ENCODE measurements at regions of chr1 and their contacts with region 1.

Region 1: DNA sequence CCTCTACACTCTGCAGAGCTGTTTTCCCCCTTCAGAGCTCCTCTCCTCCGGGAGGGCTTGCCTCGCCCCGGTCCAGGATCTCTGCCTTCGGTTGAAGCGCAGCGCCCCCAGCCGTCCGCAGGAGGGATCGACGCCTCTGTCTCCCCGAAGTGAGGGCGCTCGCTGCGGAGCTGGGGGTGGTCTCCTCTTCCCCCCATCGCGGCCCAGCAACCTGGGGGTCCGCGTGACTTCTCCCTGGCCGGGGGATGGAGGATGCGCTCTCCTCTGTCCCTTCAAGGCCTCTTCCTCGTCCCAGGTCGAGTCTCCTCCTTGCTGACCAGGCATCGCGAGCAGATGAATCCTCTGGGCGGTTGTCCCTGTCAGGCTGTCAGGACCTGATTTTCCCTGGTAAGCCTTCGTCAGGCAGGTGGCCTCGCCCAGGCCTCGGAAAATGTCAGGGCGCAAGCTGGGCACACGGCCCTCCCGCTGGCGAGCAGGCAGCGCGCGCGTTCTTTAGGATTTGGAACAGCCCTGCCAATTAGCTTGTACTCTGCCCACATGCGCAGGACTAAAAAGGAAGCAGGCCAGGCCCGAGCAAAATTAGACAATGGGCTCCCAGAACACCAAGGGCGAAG is 90.5 kb downstream of the EDEM3 start:
- DNase-seq: peak; percentile 88
- ATAC-seq: peak; percentile 94

Region 2: GRCh38 chr1:184075055-184076029 is 588.8 kb before region 1 on chr1:
- intact Hi-C with region 1: loop called (anchors 10 kb)
- DNase-seq: no peak
- ATAC-seq: peak; percentile 86

Region 3: DNA sequence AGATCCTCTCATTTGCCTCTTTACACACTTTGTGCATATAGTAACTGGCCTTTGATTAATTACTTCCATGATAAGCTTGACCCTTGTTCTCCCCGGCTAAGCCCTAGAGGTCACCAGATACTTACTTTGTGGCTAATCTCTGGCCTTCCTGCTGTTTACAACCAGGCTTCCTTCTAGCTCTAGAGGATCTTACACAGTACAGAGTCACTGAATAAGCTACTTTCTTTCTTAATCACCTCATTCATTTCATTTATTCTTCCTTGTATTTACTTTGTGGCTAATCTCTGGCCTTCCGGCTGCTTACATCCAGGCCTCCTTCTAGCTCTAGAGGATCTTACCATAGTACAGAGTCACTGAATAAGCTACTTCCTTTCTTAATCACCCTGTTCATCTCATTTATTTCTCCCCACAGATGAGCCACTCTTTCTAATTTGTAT is 421.6 kb before region 1 on chr1:
- intact Hi-C with region 1: loop called (anchors 2 kb)
- DNase-seq: no peak
- ATAC-seq: peak; percentile 84

Region 4: GRCh38 chr1:184296466-184297243 is 367.5 kb before region 1 on chr1:
- intact Hi-C with region 1: loop called (anchors 10 kb)
- DNase-seq: peak; percentile 91
- ATAC-seq: peak; percentile 88

Region 5: GRCh38 chr1:184386312-184387068 is 277.7 kb before region 1 on chr1 and contains the start of gene C1orf21:
- intact Hi-C with region 1: loop called (anchors 2 kb)
- DNase-seq: peak; percentile 94
- ATAC-seq: peak; percentile 98
- total RNA-seq, gene C1orf21: 54.5 TPM

Region 6: DNA sequence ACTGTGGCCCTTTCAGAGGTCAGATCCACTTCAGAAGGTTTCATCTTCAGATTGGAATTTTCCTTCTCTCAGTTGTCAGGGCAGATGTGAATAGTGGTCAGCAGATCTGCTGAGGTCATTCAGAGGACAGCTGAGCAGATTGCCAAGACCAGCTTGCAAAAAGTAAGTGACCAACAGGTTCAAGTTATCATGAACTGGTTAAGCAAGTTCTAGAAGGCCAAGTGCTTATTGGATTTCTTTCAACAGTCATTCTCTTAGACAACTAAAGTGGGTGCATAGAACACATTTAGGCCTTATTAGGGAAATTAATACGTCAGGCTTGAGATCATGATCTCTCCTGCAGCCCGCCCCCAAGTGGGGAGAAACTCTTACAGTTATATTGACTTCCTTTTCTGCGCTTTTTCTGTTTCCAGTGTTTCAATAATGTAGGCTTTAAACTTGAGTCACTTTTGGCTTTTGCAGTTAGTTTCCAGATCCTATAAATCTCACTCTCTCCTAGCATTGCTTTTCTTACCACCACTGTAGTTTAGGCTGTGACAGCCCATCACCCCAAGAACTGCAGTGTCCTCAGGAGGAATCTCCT is 181.0 kb before region 1 on chr1:
- intact Hi-C with region 1: loop called (anchors 5 kb)
- DNase-seq: no peak
- ATAC-seq: peak; percentile 65

Region 7: GRCh38 chr1:184563308-184563707 is 100.8 kb before region 1 on chr1:
- intact Hi-C with region 1: loop called (anchors 2 kb)
- DNase-seq: no peak
- ATAC-seq: peak; percentile 47

Region 8: DNA sequence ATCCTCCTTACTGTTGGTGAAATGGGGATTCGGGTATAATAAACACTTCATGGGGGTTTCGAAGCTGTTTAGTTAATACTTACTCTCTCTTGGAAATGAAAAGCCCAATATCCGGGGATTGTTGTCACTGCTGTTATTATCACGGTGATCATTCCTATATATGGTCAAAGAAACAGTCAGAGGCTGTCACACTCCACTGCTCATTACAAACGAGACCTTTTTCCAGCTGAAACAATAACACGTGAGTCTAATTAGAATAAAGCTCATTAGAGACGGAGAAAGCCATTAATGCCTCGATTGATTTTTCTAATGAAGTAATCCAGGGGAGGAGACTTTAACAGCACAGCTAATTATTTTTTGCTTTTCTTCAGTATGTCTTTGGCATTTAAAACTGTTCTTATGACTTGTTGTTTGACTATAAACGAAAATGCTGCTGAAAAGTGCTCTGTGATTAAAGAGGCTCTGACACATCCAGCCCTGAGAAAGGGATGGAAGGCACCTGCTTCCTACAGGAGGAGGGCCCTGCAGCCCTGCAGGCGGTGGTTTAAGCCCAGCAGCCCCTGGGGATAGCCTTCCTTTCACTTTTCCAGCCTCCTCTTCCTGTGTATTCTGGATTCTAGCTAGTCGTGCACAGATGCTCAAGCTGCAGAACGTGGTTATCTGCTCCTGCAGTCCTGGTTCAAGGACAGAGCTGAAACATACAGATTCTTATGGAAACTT is 53.1 kb before region 1 on chr1:
- intact Hi-C with region 1: no loop called
- DNase-seq: no peak
- ATAC-seq: peak; percentile 73

Region 9: DNA sequence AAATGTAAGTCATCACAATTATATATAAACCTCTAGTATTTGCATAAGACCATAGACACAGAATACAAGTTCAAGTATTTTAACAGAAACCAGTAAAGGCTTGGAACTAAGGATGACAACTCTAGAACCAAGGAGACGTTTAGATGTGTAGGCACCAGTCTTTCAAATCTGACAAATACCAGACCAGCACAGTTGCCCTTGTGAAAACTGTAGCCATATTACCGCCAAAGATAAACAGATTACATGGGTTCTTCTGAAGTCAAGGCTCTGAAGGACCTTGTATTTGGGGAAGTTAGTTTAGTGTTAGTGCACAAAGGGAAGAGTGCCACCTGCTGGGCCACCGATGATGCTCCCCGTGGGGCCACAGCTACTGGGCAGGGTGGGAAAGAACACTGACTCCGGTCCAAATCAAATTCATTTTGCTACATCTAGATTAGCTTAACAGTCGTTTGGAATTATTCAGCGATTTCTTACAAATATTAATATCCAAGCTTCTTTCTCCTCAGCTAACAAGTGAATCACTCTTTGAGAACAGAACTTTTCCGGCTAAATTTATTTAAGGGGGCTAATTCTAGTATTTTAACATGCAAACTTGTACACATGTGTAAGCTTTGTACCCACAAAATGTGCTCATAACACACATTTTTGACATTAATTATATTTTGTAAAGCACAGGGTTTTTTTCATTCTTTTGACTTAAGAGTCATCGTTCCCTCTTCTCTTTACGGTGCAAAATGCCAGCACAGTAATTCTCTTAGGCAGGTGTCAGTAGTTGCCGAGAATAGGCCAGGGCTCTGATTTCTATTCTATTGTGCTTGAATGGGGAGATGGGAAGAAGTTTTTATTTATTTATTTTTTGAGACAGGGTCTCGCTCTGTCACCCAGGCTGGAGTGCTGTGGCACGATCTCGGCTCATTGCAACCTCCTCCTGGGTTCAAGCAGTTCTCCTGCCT is 318.1 kb after region 1 on chr1:
- intact Hi-C with region 1: no loop called
- DNase-seq: peak; percentile 91
- ATAC-seq: peak; percentile 98